SK-N-SH (cell line): ENCODE measurements at regions of chr6 and their contacts with region 1.

Region 1: GRCh38 chr6:16770701-16771569 is 9.7 kb upstream of the ATXN1 start:
- DNase-seq: peak; percentile 74
- H3K4me3 ChIP-seq: no peak overlapping the region
- H3K27ac ChIP-seq: peak overlapping the region; percentile 90 to 92; a peak in 3 of 4 replicates
- H3K4me1 ChIP-seq: peaks cover 0 to 42% of the 10 kb centered on the region in 2 experiments
- H3K27me3 ChIP-seq: no peaks in the 10 kb centered on the region
- CTCF ChIP-seq: peak; percentile 78
- EP300 ChIP-seq: no peak
- RAD21 ChIP-seq: peak; percentile 60

Region 2: DNA sequence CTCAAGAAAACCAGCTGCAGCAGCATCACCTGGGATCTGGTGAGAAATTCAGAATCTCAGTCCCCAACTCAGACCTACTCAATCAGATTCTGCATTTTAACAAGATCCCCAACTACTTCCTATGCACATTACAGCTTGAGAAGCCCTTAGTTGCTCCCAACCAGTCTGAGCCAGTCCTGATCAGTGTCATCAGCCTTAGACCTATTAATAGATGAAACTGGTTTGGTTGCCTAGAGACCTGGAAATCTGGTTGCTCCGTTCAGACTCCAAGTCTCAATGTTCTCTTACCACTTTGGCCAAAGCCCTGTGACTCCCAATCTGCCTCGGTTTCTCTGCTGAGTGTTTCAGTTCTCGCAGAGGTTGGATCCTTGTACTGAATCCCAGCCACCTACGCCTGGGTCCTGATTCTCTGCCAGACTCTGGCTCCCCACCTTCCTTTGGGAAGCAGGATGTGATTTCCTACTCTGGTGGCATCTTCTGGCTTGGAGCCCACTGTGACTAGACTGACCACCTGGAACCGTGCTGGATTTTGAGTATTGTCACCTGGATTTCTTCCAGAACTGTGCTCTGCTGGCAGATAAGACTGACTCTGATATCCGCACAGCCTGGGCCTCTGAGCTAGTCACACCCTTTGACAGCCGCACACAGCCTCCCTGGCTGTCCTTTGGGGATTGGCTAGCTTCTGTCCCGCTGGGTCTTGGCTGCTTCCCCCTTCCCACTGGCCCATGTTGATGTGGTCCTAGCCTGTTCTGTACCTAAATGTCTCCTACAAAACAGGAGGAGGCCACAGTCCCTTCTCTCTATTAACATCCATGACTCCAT is 10.6 kb after region 1 on chr6:
- CTCF ChIA-PET with region 1: interaction called, 11 read pairs
- POLR2A ChIA-PET with region 1: no interaction called
- DNase-seq: no peak
- H3K4me3 ChIP-seq: no peak overlapping the region
- H3K27ac ChIP-seq: peak overlapping the region in 1 of 2 experiments; percentile 50; a peak in 2 of 4 replicates
- H3K4me1 ChIP-seq: peaks cover 0 to 3% of the 10 kb centered on the region in 2 experiments
- H3K27me3 ChIP-seq: no peaks in the 10 kb centered on the region
- CTCF ChIP-seq: no peak
- EP300 ChIP-seq: no peak
- RAD21 ChIP-seq: no peak